ENCODE measurements at regions of chr9 and their contacts with region 1.

Region 1: GRCh38 chr9:79571309-79572031 is at the start of gene TLE4:
- DNase-seq: peak; percentile 99 to 100 (median 100)
- H3K4me3 ChIP-seq: peak within 1 kb of the TSS; percentile 66 to 69
- H3K4me3 Mint-ChIP-seq: peak within 1 kb of the TSS; percentile 63 to 96 (median 78)
- H3K27ac ChIP-seq: peak within 1 kb of the TSS; percentile 85
- H3K27ac Mint-ChIP-seq: peak within 1 kb of the TSS in 6 of 7 donors; percentile 43 to 95 (median 79)
- H3K4me1 ChIP-seq: peaks cover 37% of the 10 kb centered on the region
- H3K4me1 Mint-ChIP-seq: peaks cover 24 to 37% (median 27%) of the 10 kb centered on the region in 4 donors
- H3K27me3 ChIP-seq: peaks cover 8% of the 10 kb centered on the region
- H3K27me3 Mint-ChIP-seq: peaks cover 6% of the 10 kb centered on the region in 2 donors
- total RNA-seq, gene TLE4: 98.6 to 101 TPM

Region 2: DNA sequence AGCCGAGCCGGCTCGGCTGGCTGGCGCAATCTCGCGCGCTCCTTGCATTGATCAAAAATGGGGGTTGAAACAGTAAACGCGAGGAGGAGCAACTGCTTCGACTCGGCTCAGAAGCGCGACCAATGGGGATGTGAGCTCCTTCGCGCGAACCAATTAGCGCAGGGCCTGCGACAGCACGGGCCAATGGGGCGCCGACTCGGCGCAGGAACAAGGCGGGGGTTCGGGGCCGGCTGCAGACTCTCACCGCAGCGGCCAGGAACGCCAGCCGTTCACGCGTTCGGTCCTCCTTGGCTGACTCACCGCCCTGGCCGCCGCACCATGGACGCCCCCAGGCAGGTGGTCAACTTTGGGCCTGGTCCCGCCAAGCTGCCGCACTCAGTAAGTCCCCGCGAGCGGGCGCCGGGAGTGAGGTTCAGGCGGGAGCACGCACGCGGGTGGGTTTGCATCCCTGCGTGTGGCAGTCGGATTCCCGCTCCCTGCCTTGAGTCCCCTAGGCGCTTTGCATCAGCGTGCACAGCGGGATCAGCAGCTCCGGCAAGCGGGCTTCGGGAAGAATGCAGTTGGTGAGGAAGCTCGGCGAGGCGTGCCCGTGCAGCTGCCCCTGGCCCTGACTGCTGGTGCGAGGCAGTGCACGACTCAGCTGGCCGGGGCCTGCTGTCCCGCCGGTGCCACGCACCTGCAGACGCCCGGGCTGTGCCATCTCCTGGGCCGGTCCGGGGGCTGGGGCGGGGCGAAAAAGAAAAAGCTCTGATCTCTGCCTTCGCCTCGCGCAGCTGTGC is 1274.4 kb before region 1 on chr9 and contains the start of gene PSAT1:
- CTCF ChIA-PET with region 1: no interaction called
- POLR2A ChIA-PET with region 1: no interaction called
- intact Hi-C with region 1: loop called (anchors 5 kb)
- DNase-seq: peak; percentile 86 to 90 (median 88)
- H3K4me3 ChIP-seq: peak within 1 kb of the TSS; percentile 55 to 83
- H3K4me3 Mint-ChIP-seq: peak within 1 kb of the TSS; percentile 89 to 95 (median 90)
- H3K27ac ChIP-seq: peak within 1 kb of the TSS; percentile 40
- H3K27ac Mint-ChIP-seq: peak within 1 kb of the TSS; percentile 43 to 91 (median 80)
- H3K4me1 ChIP-seq: peaks cover 25% of the 10 kb centered on the region
- H3K4me1 Mint-ChIP-seq: peaks cover 18 to 37% (median 25%) of the 10 kb centered on the region in 4 donors
- H3K27me3 ChIP-seq: no peaks in the 10 kb centered on the region
- H3K27me3 Mint-ChIP-seq: peaks cover 0 to 2% of the 10 kb centered on the region in 2 donors
- total RNA-seq, gene PSAT1: 9.7 to 10.3 TPM

Region 3: GRCh38 chr9:79237861-79238260 is 333.6 kb before region 1 on chr9:
- CTCF ChIA-PET with region 1: no interaction called
- POLR2A ChIA-PET with region 1: no interaction called
- intact Hi-C with region 1: no loop called
- DNase-seq: no peak
- H3K4me3 ChIP-seq: no peak overlapping the region
- H3K4me3 Mint-ChIP-seq: no peak overlapping the region
- H3K27ac ChIP-seq: no peak overlapping the region
- H3K27ac Mint-ChIP-seq: no peak overlapping the region
- H3K4me1 ChIP-seq: no peaks in the 10 kb centered on the region
- H3K4me1 Mint-ChIP-seq: no peaks in the 10 kb centered on the region
- H3K27me3 ChIP-seq: no peaks in the 10 kb centered on the region
- H3K27me3 Mint-ChIP-seq: peaks cover 0 to 4% of the 10 kb centered on the region in 2 donors

Region 4: GRCh38 chr9:79377339-79377855 is 194.1 kb before region 1 on chr9:
- CTCF ChIA-PET with region 1: no interaction called
- POLR2A ChIA-PET with region 1: no interaction called
- intact Hi-C with region 1: no loop called
- DNase-seq: no peak
- H3K4me3 ChIP-seq: no peak overlapping the region
- H3K4me3 Mint-ChIP-seq: no peak overlapping the region
- H3K27ac ChIP-seq: no peak overlapping the region
- H3K27ac Mint-ChIP-seq: no peak overlapping the region
- H3K4me1 ChIP-seq: no peaks in the 10 kb centered on the region
- H3K4me1 Mint-ChIP-seq: no peaks in the 10 kb centered on the region
- H3K27me3 ChIP-seq: no peaks in the 10 kb centered on the region
- H3K27me3 Mint-ChIP-seq: peaks cover 6% of the 10 kb centered on the region in 2 donors

Region 5: DNA sequence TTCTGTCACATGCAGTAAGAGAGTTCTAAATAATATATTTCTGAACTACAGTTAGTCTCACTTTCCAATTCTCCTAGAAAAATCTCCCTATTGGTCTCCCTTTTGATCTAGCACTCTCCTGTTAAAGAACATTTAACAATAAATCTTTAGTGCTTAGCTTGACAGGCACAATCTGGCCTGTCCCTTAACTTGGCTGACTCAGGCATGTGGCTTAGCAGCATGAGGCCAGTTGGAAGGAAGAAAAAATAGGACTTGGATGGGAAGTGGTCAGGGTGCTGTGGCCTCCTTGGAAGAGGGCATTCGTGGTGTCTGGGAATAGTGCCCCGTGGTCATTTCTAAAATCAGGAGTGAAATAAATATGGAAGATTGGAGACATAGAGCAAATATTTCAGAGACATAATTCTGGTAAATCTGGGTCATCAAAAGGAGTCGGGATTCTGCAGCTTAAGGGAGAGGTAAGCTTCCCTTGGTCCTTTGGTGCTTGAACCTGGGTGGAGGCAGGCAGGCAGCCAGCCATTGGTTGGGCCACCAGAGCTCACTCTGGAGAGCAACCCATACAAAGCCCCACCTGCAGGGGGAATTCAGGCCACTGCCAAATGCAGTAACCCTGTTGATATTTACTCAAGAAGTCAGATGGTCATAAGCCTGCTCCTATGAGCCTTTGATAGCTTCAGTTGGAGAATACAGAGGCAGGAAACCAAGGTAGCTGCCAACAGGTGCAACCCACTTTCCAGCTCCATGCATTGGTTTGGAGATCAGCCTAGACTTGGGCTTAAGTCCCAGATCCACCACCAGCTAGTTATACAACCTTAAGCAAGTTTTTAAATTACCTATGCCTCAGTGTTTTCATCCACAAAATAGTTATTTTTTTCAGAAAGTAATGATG is 28.5 kb before region 1 on chr9:
- CTCF ChIA-PET with region 1: no interaction called
- POLR2A ChIA-PET with region 1: interaction called, 18 read pairs
- intact Hi-C with region 1: loop called (anchors 1 kb)
- DNase-seq: no peak
- H3K4me3 ChIP-seq: no peak overlapping the region
- H3K4me3 Mint-ChIP-seq: peak overlapping the region in 1 of 8 donors; percentile 13
- H3K27ac ChIP-seq: no peak overlapping the region
- H3K27ac Mint-ChIP-seq: peak overlapping the region in 4 of 7 donors; percentile 36 to 93 (median 60)
- H3K4me1 ChIP-seq: peaks cover 10% of the 10 kb centered on the region
- H3K4me1 Mint-ChIP-seq: peaks cover 8 to 23% (median 13%) of the 10 kb centered on the region in 4 donors
- H3K27me3 ChIP-seq: no peaks in the 10 kb centered on the region
- H3K27me3 Mint-ChIP-seq: peaks cover 6 to 7% of the 10 kb centered on the region in 2 donors

Region 6: DNA sequence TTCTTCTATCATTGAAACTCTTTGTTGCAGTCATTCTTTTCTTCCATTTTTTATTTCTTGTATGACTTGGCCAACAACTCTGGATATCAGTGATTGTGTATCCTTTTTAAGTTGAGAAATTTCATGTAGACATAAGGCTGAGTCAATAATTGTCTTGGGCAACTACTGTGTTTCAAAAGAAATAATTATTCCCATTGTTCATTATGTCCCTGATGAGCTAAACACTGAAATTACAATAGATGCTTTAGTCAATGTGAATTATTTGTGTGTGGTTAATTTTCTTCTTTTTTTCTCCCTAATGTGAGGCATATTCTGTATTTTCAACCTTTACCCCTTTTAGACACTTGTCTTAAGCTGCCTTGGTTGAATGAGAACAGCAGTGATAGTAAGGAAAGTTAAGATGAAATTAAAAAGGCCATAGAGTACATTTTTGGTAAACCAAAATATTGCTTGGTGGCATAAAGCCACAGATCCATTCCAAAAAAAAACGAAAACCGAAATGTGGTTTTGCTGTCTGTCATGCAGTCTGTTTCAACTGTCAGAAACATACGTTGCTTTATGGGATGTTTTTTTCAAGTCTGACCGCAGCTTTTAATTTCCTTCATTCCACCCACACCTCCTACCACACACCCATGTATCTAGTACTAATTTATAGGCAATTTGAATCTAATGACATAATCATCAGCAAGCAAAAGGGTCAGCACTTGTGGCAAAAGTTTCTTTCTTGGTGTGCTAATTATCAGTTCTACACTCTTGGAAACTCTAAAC is 21.4 kb after region 1 on chr9:
- CTCF ChIA-PET with region 1: interaction called, 3 read pairs
- POLR2A ChIA-PET with region 1: interaction called, 11 read pairs
- intact Hi-C with region 1: no loop called
- DNase-seq: peak; percentile 46 to 61 (median 53)
- H3K4me3 ChIP-seq: no peak overlapping the region
- H3K4me3 Mint-ChIP-seq: peak overlapping the region in 7 of 8 donors; percentile 30 to 79 (median 66)
- H3K27ac ChIP-seq: no peak overlapping the region
- H3K27ac Mint-ChIP-seq: peak overlapping the region; percentile 9 to 73 (median 51)
- H3K4me1 ChIP-seq: peaks cover 47% of the 10 kb centered on the region
- H3K4me1 Mint-ChIP-seq: peaks cover 53 to 90% (median 72%) of the 10 kb centered on the region in 4 donors
- H3K27me3 ChIP-seq: no peaks in the 10 kb centered on the region
- H3K27me3 Mint-ChIP-seq: no peaks in the 10 kb centered on the region

Region 7: DNA sequence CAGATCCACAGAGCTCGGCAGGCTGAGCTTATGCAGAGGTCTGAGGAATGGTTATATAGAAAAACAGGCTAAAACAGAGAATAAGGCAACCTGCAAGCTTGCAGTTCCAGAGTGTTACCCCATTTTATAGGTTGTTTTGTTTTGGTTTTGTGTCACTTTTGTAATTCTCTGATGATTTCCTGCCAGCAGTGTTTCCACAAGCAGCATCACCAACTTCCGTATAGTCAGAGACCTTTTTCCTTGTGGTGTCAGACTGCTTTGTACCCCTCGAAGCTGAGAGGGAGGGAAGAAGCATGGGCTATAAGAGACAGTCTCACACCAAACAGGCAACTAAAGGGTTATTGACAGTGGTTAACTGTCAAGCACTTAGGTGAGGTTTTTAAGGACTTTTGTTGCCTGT is 62.1 kb after region 1 on chr9:
- CTCF ChIA-PET with region 1: interaction called, 3 read pairs
- POLR2A ChIA-PET with region 1: interaction called, 22 read pairs
- intact Hi-C with region 1: no loop called
- DNase-seq: peak in 1 of 5 donors; percentile 8
- H3K4me3 ChIP-seq: no peak overlapping the region
- H3K4me3 Mint-ChIP-seq: peak overlapping the region in 5 of 8 donors; percentile 1 to 63 (median 45)
- H3K27ac ChIP-seq: no peak overlapping the region
- H3K27ac Mint-ChIP-seq: peak overlapping the region in 4 of 7 donors; percentile 1 to 88 (median 41)
- H3K4me1 ChIP-seq: peaks cover 59% of the 10 kb centered on the region
- H3K4me1 Mint-ChIP-seq: peaks cover 52 to 89% (median 72%) of the 10 kb centered on the region in 4 donors
- H3K27me3 ChIP-seq: no peaks in the 10 kb centered on the region
- H3K27me3 Mint-ChIP-seq: no peaks in the 10 kb centered on the region

Region 8: GRCh38 chr9:79662537-79662956 is 91.1 kb after region 1 on chr9:
- CTCF ChIA-PET with region 1: no interaction called
- POLR2A ChIA-PET with region 1: interaction called, 5 read pairs
- intact Hi-C with region 1: loop called (anchors 2 kb)
- DNase-seq: peak in 4 of 5 donors; percentile 24 to 47 (median 32)
- H3K4me3 ChIP-seq: no peak overlapping the region
- H3K4me3 Mint-ChIP-seq: peak overlapping the region in 6 of 8 donors; percentile 38 to 59 (median 52)
- H3K27ac ChIP-seq: no peak overlapping the region
- H3K27ac Mint-ChIP-seq: peak overlapping the region; percentile 30 to 93 (median 61)
- H3K4me1 ChIP-seq: peaks cover 21% of the 10 kb centered on the region
- H3K4me1 Mint-ChIP-seq: peaks cover 32 to 73% (median 44%) of the 10 kb centered on the region in 4 donors
- H3K27me3 ChIP-seq: no peaks in the 10 kb centered on the region
- H3K27me3 Mint-ChIP-seq: no peaks in the 10 kb centered on the region

Region 9: DNA sequence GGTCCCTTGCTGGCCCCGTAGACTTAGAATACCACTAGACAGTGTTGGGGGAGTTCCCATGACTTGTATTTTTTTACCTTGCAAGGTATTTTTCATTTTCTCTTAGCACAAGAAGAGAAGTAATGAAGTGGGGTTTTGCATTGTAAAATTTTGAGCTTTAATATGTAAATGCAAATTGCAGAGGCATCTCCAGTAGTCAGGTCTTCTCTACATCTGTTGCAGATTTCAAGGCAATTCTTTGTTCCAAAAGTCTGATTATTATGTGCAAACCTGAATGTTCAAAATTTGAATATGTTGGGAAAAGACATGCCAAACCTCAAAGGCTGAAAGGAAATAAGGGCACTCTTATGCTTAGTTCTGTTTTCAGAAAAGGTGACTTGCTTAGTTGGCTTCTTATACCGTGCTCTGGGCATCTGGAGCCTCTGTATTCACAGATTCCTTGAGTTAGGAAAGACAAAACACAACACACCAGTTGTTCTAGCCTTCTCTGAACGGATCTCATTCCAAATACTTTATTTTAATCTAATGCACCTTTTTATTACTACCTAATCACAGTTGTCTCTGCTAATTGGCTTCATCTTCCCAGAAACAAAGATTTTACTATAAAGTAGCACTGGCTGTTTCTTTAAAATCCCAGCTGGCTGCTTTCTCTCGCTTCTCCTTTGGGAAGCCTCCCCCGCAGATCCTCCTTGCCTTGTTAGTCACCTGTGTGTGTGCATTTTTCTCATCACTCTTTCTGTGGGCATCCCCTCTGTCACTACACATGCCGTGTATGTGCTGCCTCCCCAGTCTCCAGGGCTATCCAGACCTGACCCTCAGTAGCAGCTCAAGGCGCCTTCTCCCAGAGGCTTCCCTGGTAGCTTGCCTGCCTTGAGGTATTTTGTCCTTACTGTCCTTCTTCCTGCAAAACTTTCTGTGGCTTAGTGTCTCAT is 138.5 kb after region 1 on chr9:
- CTCF ChIA-PET with region 1: interaction called, 3 read pairs
- POLR2A ChIA-PET with region 1: interaction called, 4 read pairs
- intact Hi-C with region 1: loop called (anchors 5 kb)
- DNase-seq: no peak
- H3K4me3 ChIP-seq: no peak overlapping the region
- H3K4me3 Mint-ChIP-seq: no peak overlapping the region
- H3K27ac ChIP-seq: no peak overlapping the region
- H3K27ac Mint-ChIP-seq: peak overlapping the region in 1 of 7 donors; percentile 86
- H3K4me1 ChIP-seq: no peaks in the 10 kb centered on the region
- H3K4me1 Mint-ChIP-seq: peaks cover 8 to 23% (median 13%) of the 10 kb centered on the region in 4 donors
- H3K27me3 ChIP-seq: no peaks in the 10 kb centered on the region
- H3K27me3 Mint-ChIP-seq: no peaks in the 10 kb centered on the region

Region 10: GRCh38 chr9:79799691-79800335 is 228.3 kb after region 1 on chr9:
- CTCF ChIA-PET with region 1: no interaction called
- POLR2A ChIA-PET with region 1: no interaction called
- intact Hi-C with region 1: no loop called
- DNase-seq: no peak
- H3K4me3 ChIP-seq: no peak overlapping the region
- H3K4me3 Mint-ChIP-seq: no peak overlapping the region
- H3K27ac ChIP-seq: no peak overlapping the region
- H3K27ac Mint-ChIP-seq: no peak overlapping the region
- H3K4me1 ChIP-seq: no peaks in the 10 kb centered on the region
- H3K4me1 Mint-ChIP-seq: no peaks in the 10 kb centered on the region
- H3K27me3 ChIP-seq: no peaks in the 10 kb centered on the region
- H3K27me3 Mint-ChIP-seq: no peaks in the 10 kb centered on the region

Region 11: DNA sequence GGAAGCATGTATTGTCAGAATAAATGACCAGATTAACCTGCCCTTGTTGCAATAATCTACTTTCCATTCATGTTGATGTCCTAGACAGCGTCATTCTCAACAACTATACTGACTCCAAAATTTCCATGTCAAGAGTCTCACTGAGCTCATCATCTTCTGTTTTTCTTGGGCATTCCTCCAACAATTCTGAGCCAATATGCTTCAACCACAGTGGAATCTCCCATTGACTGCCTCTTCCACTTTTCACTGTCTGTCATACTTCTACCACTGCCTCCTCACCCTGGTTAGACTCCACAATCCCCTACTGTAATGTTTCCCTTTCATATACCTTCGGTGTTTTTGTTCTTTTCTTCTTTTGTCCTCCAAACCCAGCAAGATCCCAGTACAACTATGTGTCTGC is 1955.1 kb after region 1 on chr9:
- CTCF ChIA-PET with region 1: no interaction called
- POLR2A ChIA-PET with region 1: no interaction called
- intact Hi-C with region 1: no loop called
- DNase-seq: no peak
- H3K4me3 ChIP-seq: no peak overlapping the region
- H3K4me3 Mint-ChIP-seq: no peak overlapping the region
- H3K27ac ChIP-seq: no peak overlapping the region
- H3K27ac Mint-ChIP-seq: no peak overlapping the region
- H3K4me1 ChIP-seq: no peaks in the 10 kb centered on the region
- H3K4me1 Mint-ChIP-seq: no peaks in the 10 kb centered on the region
- H3K27me3 ChIP-seq: no peaks in the 10 kb centered on the region
- H3K27me3 Mint-ChIP-seq: no peaks in the 10 kb centered on the region

Measured in CD4-positive, alpha-beta memory T cell (primary cell).